Activated T-helper 2 cell treated with anti-CD3 and anti-CD28 coated beads, Interferon-gamma antibody, Interleukin-2, Interleukin-4, amounts not matched to agents 10 μg/mL and 5 μg/mL and 100 μg/mL, durations not matched to agents 14 hours and 24 hours and 36 hours (primary cell): ENCODE measurements at regions of chr4 and their contacts with region 1.

Region 1: DNA sequence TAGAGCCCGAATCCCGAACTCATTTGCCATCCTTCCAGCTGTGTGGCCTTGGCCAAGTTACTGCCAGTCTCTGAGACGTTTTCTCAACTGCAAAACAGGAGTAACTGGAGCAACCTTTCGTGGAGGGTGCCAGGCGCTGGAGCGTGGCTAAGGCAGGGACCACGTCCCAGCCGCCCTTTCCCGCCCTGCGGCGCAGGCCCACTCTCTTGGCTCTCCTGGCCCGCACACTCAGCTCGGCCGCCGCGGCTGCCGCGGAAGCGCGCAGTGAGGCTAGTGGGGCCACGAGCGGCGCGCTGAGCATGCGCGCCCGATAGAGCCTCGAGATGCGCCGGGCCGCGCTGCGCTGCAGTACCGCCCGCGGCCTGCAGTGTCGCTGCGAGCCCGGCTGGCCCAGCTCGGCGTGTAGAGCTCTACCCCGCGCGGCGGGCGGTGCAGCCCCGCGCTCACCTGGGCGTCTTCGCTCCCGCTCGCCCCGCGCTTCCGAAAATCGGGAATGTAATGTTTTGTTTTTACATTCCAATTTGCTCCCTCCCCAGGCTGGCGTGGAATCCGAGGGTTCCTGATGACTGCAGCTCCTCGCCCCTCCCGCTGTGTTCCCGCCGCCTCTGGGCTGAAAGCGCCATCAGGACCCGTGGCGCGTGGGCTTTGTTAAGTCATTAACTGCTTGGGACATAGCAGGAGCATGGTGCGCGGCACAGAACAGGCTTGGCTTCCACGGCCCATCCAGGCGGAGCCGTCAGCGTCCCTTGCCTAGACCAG is 4.0 kb upstream of the ZNF518B start:
- DNase-seq: peak; percentile 75
- H3K4me3 Mint-ChIP-seq: peak overlapping the region; percentile 75
- H3K27ac Mint-ChIP-seq: no peak overlapping the region
- H3K4me1 Mint-ChIP-seq: peaks cover 23% of the 10 kb centered on the region
- H3K27me3 Mint-ChIP-seq: peaks cover 41% of the 10 kb centered on the region

Region 2: GRCh38 chr4:10164877-10165283 is 296.4 kb before region 1 on chr4:
- intact Hi-C with region 1: loop called (anchors 5 kb)
- DNase-seq: no peak
- H3K4me3 Mint-ChIP-seq: no peak overlapping the region
- H3K27ac Mint-ChIP-seq: no peak overlapping the region
- H3K4me1 Mint-ChIP-seq: peaks cover 21% of the 10 kb centered on the region
- H3K27me3 Mint-ChIP-seq: no peaks in the 10 kb centered on the region

Region 3: DNA sequence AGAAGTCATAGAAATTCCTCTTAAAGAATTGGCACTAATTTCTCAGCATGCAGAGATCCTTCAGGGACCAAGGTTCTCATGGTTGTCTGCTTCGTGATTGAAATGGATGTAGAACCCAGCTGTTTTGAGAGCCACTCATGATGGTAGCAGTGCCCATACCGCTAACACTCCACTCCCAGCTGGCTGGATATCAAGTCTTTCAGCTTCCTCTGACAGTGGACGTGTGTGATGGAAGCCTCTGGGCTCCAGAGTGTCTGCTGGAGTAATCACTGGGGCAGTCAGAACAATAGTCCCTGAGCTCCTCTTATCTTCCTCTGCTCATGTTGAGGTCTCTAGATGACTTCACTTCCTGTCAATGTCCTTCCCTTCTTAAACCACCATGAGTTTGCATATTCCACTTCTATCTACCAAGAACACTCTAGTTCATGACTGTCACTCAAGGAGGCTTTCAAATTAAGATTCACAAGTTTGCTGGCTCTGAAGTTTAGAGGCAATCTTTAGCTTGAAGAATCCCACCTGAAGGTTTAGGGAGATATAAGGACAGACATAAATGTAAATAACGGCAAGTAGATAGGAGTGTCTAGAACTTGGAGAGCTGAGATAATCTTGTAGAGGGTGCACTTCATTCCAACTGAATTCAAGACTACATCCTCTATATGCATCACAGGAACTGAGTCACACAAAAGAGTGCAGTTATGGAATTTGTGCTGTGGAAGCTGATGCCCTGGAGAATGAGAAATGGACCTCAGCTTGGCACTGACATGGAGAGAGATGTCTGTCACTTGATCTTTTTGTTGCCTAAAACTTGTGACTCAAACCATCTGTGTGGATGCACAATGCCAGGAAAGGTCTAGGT is 280.1 kb before region 1 on chr4:
- intact Hi-C with region 1: loop called (anchors 5 kb)
- DNase-seq: peak; percentile 30
- H3K4me3 Mint-ChIP-seq: no peak overlapping the region
- H3K27ac Mint-ChIP-seq: peak overlapping the region; percentile 87
- H3K4me1 Mint-ChIP-seq: peaks cover 38% of the 10 kb centered on the region
- H3K27me3 Mint-ChIP-seq: no peaks in the 10 kb centered on the region

Region 4: GRCh38 chr4:10478621-10479020 is 17.4 kb after region 1 on chr4:
- intact Hi-C with region 1: no loop called
- DNase-seq: no peak
- H3K4me3 Mint-ChIP-seq: no peak overlapping the region
- H3K27ac Mint-ChIP-seq: no peak overlapping the region
- H3K4me1 Mint-ChIP-seq: no peaks in the 10 kb centered on the region
- H3K27me3 Mint-ChIP-seq: no peaks in the 10 kb centered on the region

Region 5: GRCh38 chr4:10535912-10536311 is 74.6 kb after region 1 on chr4:
- intact Hi-C with region 1: no loop called
- DNase-seq: no peak
- H3K4me3 Mint-ChIP-seq: no peak overlapping the region
- H3K27ac Mint-ChIP-seq: no peak overlapping the region
- H3K4me1 Mint-ChIP-seq: no peaks in the 10 kb centered on the region
- H3K27me3 Mint-ChIP-seq: peaks cover 9% of the 10 kb centered on the region

Region 6: DNA sequence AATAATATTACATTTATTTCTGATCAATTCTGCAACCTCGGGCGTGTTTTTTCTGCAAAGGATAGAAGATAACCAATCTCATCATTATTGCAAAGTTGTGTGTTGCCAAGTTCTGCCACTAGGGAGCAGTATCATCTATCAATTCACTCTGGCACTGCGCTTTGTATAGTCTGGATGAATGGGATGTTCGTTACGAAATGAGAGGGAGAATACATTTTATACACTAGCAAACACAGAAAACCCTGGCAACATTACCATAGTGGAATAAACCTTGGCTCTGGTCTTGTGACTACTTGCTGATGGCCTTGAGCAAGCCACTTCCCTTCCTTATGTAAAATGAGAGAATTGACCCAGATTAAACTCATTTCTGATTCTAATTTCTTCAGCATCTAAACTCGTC is 93.4 kb after region 1 on chr4:
- intact Hi-C with region 1: loop called (anchors 5 kb)
- DNase-seq: no peak
- H3K4me3 Mint-ChIP-seq: no peak overlapping the region
- H3K27ac Mint-ChIP-seq: no peak overlapping the region
- H3K4me1 Mint-ChIP-seq: peaks cover 5% of the 10 kb centered on the region
- H3K27me3 Mint-ChIP-seq: peaks cover 2% of the 10 kb centered on the region